Ovary (tissue), 10 donors: ENCODE measurements at regions of chr3 and their contacts with region 1.

Region 1: GRCh38 chr3:98359993-98360675 is 6.5 kb downstream of the OR5K4 start:
- DNase-seq: no peak
- H3K4me3 ChIP-seq: no peak overlapping the region
- H3K27ac ChIP-seq: no peak overlapping the region
- H3K4me1 ChIP-seq: no peaks in the 10 kb centered on the region
- H3K27me3 ChIP-seq: no peaks in the 10 kb centered on the region
- CTCF ChIP-seq: no peak
- EP300 ChIP-seq: no peak
- POLR2A ChIP-seq: no peak

Region 2: DNA sequence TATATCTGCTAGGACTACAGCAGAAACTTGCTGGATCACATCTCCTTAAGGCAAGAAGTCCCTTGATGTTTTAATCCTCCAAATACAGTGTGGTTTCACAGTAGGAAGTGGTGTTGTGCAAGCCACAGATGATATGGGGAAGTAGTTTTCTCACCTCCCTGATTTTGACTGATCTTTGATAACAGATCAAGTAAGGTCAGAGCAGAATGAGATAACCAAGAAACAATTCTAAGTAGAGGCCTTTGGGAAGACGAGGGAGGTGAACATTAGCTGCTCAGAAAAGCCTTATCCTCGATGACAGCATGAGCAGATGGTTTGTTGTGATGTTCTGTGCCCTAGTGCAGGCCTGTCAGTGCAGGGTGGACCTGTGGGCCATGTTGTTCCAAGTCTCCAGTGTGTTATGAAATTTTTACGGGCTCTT is 449.2 kb before region 1 on chr3:
- intact Hi-C with region 1: no loop called
- DNase-seq: no peak
- H3K4me3 ChIP-seq: no peak overlapping the region
- H3K27ac ChIP-seq: no peak overlapping the region
- H3K4me1 ChIP-seq: no peaks in the 10 kb centered on the region
- H3K27me3 ChIP-seq: no peaks in the 10 kb centered on the region
- CTCF ChIP-seq: no peak
- EP300 ChIP-seq: no peak
- POLR2A ChIP-seq: no peak

Region 3: GRCh38 chr3:98343647-98344507 is 16.3 kb before region 1 on chr3:
- intact Hi-C with region 1: loop called in 1 of 4 experiments (anchors 1 kb)
- DNase-seq: no peak
- H3K4me3 ChIP-seq: no peak overlapping the region
- H3K27ac ChIP-seq: no peak overlapping the region
- H3K4me1 ChIP-seq: no peaks in the 10 kb centered on the region
- H3K27me3 ChIP-seq: no peaks in the 10 kb centered on the region
- CTCF ChIP-seq: no peak
- EP300 ChIP-seq: no peak
- POLR2A ChIP-seq: no peak

Region 4: DNA sequence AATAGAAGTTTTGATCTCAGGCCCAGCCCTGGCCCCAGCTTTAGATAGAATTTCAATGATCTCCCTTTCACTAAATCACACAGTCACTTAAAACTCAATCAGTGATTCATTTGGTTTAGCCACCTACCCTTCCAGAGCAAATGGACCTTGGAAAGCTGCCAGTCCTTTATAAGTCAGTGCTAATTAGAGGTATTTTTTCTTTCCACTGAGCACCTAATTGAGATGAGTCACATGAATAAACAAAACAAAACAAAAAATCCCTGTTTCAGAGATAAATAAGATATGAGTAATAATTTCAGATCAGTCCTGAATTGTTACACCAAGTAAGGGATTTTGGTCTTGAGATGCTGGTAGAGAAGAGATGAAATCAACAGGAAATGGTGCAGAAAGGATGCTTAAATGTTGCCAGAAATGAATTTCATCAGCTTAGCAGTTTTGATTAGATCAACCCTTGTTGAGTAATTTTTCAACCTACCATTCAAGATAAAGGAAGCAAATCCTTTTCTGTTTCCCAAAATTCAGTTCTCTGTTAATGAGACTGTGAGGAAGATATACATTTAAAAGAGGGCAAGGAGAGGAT is 926.2 kb after region 1 on chr3:
- intact Hi-C with region 1: no loop called
- DNase-seq: no peak
- H3K4me3 ChIP-seq: no peak overlapping the region
- H3K27ac ChIP-seq: no peak overlapping the region
- H3K4me1 ChIP-seq: no peaks in the 10 kb centered on the region
- H3K27me3 ChIP-seq: no peaks in the 10 kb centered on the region
- CTCF ChIP-seq: no peak
- EP300 ChIP-seq: no peak
- POLR2A ChIP-seq: no peak